PC-3 (cell line): ENCODE measurements at regions of chr16 and their contacts with region 1.

Region 1: DNA sequence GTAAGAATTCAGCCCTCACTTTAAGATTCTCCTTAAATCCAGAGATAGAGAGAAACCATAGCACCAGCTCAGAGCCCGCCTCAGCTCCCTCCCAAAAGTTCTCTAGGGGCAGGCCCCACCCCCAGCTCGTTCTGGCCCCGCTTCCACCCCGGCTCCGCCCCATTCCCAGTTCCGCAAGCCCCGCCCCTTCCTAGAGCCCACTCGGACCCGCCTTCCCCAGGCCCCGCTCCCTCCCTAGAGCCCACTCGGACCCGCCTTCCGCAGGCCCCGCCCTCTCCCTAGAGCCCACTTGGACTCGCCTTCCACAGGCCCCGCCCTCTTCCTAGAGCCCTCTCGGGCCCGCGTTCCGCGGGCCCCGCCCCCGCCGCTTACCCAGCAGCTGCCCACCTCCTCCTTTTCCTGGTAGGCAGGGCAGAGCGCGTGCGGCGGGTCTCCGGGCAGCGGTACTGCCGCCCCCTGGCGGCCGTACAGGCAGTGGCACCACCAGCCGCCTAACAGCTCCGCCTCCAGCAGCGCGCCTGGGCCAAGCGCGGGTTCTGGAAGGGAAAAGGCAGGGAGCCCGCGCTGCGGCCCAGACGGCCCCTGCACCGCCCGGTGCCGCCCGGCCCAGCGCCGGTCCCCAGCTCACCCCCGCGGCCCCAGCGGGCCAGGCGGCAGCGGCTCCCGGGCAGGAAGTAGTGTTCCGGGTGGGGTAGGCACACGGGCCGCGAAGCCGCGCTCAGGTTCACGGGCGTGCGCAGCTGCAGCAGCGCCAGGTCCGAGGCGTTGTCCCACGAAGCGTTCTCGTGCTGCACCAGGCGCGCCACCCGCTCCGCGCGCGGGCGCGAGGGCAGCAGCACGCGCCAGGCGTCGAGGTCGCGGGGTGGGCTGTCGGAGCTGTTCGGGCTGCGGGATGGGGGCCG is 6.8 kb upstream of the PRSS8 start:
- DNase-seq: peak; percentile 96
- ATAC-seq: peak; percentile 78
- H3K4me3 ChIP-seq: peak overlapping the region; percentile 58
- H3K27ac ChIP-seq: peak overlapping the region; percentile 70
- H3K4me1 ChIP-seq: peaks cover 21% of the 10 kb centered on the region
- H3K27me3 ChIP-seq: no peaks in the 10 kb centered on the region
- CTCF ChIP-seq: peak; percentile 77

Region 2: GRCh38 chr16:30974348-30974747 is 168.0 kb before region 1 on chr16:
- CTCF ChIA-PET with region 1: no interaction called
- POLR2A ChIA-PET with region 1: no interaction called
- intact Hi-C with region 1: no loop called
- DNase-seq: no peak
- ATAC-seq: no peak
- H3K4me3 ChIP-seq: no peak overlapping the region
- H3K27ac ChIP-seq: no peak overlapping the region
- H3K4me1 ChIP-seq: no peaks in the 10 kb centered on the region
- H3K27me3 ChIP-seq: no peaks in the 10 kb centered on the region
- CTCF ChIP-seq: no peak

Region 3: GRCh38 chr16:30984669-30985400 is 157.5 kb before region 1 on chr16 and contains the start of gene HSD3B7:
- CTCF ChIA-PET with region 1: interaction called, 11 read pairs
- POLR2A ChIA-PET with region 1: no interaction called
- intact Hi-C with region 1: no loop called
- DNase-seq: peak; percentile 78
- ATAC-seq: peak; percentile 90
- H3K4me3 ChIP-seq: peak within 1 kb of the TSS; percentile 52; the same call in 1 of the 2 replicates
- H3K27ac ChIP-seq: no peak within 1 kb of the TSS
- H3K4me1 ChIP-seq: peaks cover 7% of the 10 kb centered on the region; the same call in 1 of the 2 replicates
- H3K27me3 ChIP-seq: no peaks in the 10 kb centered on the region
- CTCF ChIP-seq: peak; percentile 74
- total RNA-seq, gene HSD3B7: 12.0 and 16.3 TPM in 2 replicates

Region 4: DNA sequence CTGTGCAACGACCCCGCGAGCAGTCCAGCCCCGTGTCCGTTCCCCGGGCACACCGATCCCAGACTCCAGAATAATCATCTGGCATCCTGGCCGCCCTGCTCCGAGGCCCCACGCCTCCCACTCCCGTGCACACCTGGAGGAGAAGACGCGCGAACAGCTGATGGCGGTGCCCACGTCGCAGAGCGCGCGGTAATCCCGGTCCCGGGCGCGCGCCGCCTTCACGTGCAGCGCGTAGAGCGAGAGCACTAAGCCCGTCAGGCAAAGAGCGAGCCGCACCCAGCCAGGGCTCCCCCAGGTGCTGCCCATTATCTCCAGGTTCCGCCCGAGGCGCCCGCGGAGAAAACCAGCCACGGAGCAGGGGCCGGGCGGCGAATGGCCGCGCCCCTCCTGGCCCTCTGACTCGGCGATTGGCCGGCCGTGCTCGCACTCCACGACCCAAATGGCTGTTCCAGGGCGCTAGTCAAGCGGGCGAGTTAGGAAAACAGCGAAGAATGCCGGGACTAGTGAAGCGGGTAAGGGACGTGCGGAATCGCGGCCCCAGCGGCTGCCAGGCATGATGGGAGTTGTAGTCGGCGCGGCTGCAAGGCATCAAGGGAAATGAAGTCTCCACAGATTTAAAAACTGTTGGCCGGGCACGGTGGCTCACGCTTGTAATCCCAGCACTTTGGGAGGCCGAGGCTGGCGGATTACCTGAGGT is 47.8 kb before region 1 on chr16 and contains the start of gene VKORC1:
- CTCF ChIA-PET with region 1: no interaction called
- POLR2A ChIA-PET with region 1: interaction called, 10 read pairs
- intact Hi-C with region 1: loop called (anchors 1 kb)
- DNase-seq: peak; percentile 96
- ATAC-seq: peak; percentile 94
- H3K4me3 ChIP-seq: peak within 1 kb of the TSS; percentile 98
- H3K27ac ChIP-seq: peak within 1 kb of the TSS; percentile 68
- H3K4me1 ChIP-seq: peaks cover 7% of the 10 kb centered on the region; the same call in 1 of the 2 replicates
- H3K27me3 ChIP-seq: no peaks in the 10 kb centered on the region
- CTCF ChIP-seq: no peak
- total RNA-seq, gene VKORC1: 105 and 127 TPM in 2 replicates

Region 5: GRCh38 chr16:31157136-31157535 is 14.8 kb after region 1 on chr16:
- CTCF ChIA-PET with region 1: interaction called, 13 read pairs
- POLR2A ChIA-PET with region 1: no interaction called
- intact Hi-C with region 1: no loop called
- DNase-seq: no peak
- ATAC-seq: peak; percentile 45; the same call in 1 of the 2 replicates
- H3K4me3 ChIP-seq: no peak overlapping the region
- H3K27ac ChIP-seq: no peak overlapping the region
- H3K4me1 ChIP-seq: no peaks in the 10 kb centered on the region
- H3K27me3 ChIP-seq: no peaks in the 10 kb centered on the region
- CTCF ChIP-seq: no peak

Region 6: GRCh38 chr16:31253642-31254045 is 111.3 kb after region 1 on chr16:
- CTCF ChIA-PET with region 1: no interaction called
- POLR2A ChIA-PET with region 1: interaction called, 14 read pairs
- intact Hi-C with region 1: no loop called
- DNase-seq: no peak
- ATAC-seq: no peak
- H3K4me3 ChIP-seq: no peak overlapping the region
- H3K27ac ChIP-seq: no peak overlapping the region
- H3K4me1 ChIP-seq: no peaks in the 10 kb centered on the region
- H3K27me3 ChIP-seq: 0 out of 2 replicates have a peak, but pooled peaks cover 5% of the 10 kb centered on the region
- CTCF ChIP-seq: no peak